ENCODE measurements at regions of chr11 and their contacts with region 1.

Region 1: GRCh38 chr11:10307442-10308207 is 2.8 kb downstream of the ADM start:
- DNase-seq: peak; percentile 71 to 83
- H3K4me3 ChIP-seq: peak overlapping the region; percentile 70 to 94 (median 93)
- H3K27ac ChIP-seq: peak overlapping the region; percentile 81 to 95
- H3K4me1 ChIP-seq: peaks cover 0 to 5% of the 10 kb centered on the region in 2 donors
- H3K27me3 ChIP-seq: no peaks in the 10 kb centered on the region
- CTCF ChIP-seq: peak; percentile 95 to 99 (median 99)
- POLR2A ChIP-seq: no peak

Region 2: GRCh38 chr11:8688414-8689362 is 1618.9 kb before region 1 on chr11:
- intact Hi-C with region 1: loop called (anchors 5 kb)
- DNase-seq: peak; percentile 90 to 91
- H3K4me3 ChIP-seq: peak overlapping the region; percentile 54 to 73 (median 60)
- H3K27ac ChIP-seq: peak overlapping the region; percentile 83 to 89
- H3K4me1 ChIP-seq: peaks cover 14 to 16% of the 10 kb centered on the region in 2 donors
- H3K27me3 ChIP-seq: no peaks in the 10 kb centered on the region
- CTCF ChIP-seq: no peak
- POLR2A ChIP-seq: peak; percentile 21

Region 3: GRCh38 chr11:9757809-9758636 is 549.6 kb before region 1 on chr11:
- intact Hi-C with region 1: loop called (anchors 5 kb)
- DNase-seq: peak; percentile 66 to 79
- H3K4me3 ChIP-seq: peak overlapping the region; percentile 62 to 74 (median 68)
- H3K27ac ChIP-seq: peak overlapping the region; percentile 90 to 96
- H3K4me1 ChIP-seq: peaks cover 0 to 22% of the 10 kb centered on the region in 2 donors
- H3K27me3 ChIP-seq: no peaks in the 10 kb centered on the region
- CTCF ChIP-seq: peak in 2 of 3 donors; percentile 39 to 94
- POLR2A ChIP-seq: no peak

Region 4: DNA sequence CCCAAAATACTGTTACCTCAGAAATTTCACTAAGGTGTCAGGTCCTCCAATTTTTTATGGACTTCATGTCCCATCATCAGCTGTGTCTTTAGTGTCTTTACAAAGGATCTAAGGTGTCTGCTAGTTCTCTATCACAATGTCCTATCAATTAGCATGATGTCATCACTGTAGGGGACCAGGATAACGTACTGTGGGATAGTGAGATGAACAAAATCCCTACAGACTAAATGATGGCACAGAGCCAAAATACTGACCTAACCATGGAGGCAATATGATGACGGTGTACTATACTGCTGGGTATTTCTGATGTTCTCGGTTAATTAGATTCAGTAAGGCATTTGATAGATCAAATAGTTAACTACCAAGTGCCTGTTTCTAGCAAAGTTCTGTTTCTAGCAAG is 96.2 kb before region 1 on chr11:
- intact Hi-C with region 1: loop called (anchors 10 kb)
- DNase-seq: no peak
- H3K4me3 ChIP-seq: no peak overlapping the region
- H3K27ac ChIP-seq: no peak overlapping the region
- H3K4me1 ChIP-seq: no peaks in the 10 kb centered on the region
- H3K27me3 ChIP-seq: no peaks in the 10 kb centered on the region
- CTCF ChIP-seq: no peak
- POLR2A ChIP-seq: no peak

Region 5: GRCh38 chr11:10285148-10285802 is 22.4 kb before region 1 on chr11:
- intact Hi-C with region 1: no loop called
- DNase-seq: no peak
- H3K4me3 ChIP-seq: no peak overlapping the region
- H3K27ac ChIP-seq: no peak overlapping the region
- H3K4me1 ChIP-seq: no peaks in the 10 kb centered on the region
- H3K27me3 ChIP-seq: no peaks in the 10 kb centered on the region
- CTCF ChIP-seq: no peak
- POLR2A ChIP-seq: no peak